CD4-positive, alpha-beta memory T cell (primary cell): ENCODE measurements at regions of chr12 and their contacts with region 1.

Region 1: DNA sequence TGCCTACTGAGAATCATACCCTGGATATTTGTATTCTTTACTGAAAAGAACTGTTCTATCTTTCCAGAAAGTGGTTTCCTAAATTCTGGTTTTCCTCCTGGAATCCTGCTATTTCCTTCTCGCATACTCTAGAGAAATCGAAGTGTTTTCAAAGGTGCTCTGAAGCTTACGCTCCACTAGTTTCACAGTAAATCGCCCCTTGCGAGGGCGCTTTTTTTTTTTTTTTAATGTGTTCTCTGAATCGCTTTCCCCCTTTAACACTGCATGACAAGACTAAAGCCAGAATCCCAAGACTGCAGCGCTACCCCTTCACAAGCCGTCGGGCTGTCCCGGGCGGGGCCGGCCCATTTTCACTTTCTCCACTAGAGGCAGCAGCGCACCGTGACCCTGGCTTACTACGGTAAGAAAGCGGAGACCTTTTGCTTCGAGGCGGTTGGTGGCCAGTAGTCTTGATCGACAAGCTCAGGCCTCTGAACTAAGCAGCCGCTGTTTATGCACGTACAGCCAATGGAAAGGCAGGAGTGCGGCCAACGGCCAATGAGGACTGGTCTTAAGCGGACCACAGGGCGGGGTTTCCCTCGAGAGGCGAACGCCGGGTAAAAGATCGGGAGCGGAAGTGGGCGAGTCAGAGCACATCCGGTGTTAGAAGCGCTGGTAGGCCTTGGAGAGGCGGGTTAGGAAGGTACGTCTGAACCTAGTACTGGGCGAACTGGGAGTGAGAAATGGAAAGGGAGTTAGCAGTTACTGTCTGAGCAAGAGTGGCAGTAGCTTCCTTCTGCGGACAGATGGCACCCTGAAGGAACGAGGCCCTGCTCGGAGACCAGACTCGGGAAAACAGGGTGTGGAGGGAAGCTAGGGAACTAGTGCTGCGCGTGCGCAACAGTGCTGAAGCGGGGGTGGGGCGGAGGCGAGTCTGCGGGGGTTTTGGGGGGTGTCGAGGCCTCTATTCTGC is at the start of gene TMBIM6:
- DNase-seq: peak; percentile 98 to 100 (median 99)
- H3K4me3 ChIP-seq: peak within 1 kb of the TSS; percentile 27 to 86
- H3K4me3 Mint-ChIP-seq: peak within 1 kb of the TSS; percentile 92 to 97 (median 93)
- H3K27ac ChIP-seq: peak within 1 kb of the TSS; percentile 99
- H3K27ac Mint-ChIP-seq: peak within 1 kb of the TSS; percentile 95 to 100 (median 98)
- H3K4me1 ChIP-seq: peaks cover 45% of the 10 kb centered on the region
- H3K4me1 Mint-ChIP-seq: peaks cover 27 to 52% (median 38%) of the 10 kb centered on the region in 4 donors
- H3K27me3 ChIP-seq: no peaks in the 10 kb centered on the region
- H3K27me3 Mint-ChIP-seq: no peaks in the 10 kb centered on the region
- total RNA-seq, gene TMBIM6: 421 to 431 TPM

Region 2: GRCh38 chr12:49130151-49131050 is 610.8 kb before region 1 on chr12:
- CTCF ChIA-PET with region 1: no interaction called
- POLR2A ChIA-PET with region 1: interaction called, 9 read pairs
- intact Hi-C with region 1: loop called (anchors 1 kb)
- DNase-seq: peak; percentile 93 to 95 (median 94)
- H3K4me3 ChIP-seq: peak overlapping the region; percentile 94 to 97
- H3K4me3 Mint-ChIP-seq: peak overlapping the region; percentile 97 to 99 (median 98)
- H3K27ac ChIP-seq: peak overlapping the region; percentile 94
- H3K27ac Mint-ChIP-seq: peak overlapping the region; percentile 98 to 99 (median 99)
- H3K4me1 ChIP-seq: peaks cover 42% of the 10 kb centered on the region
- H3K4me1 Mint-ChIP-seq: peaks cover 24 to 63% (median 36%) of the 10 kb centered on the region in 4 donors
- H3K27me3 ChIP-seq: no peaks in the 10 kb centered on the region
- H3K27me3 Mint-ChIP-seq: no peaks in the 10 kb centered on the region

Region 3: GRCh38 chr12:49623142-49623904 is 117.9 kb before region 1 on chr12 and contains the start of gene PRPF40B:
- CTCF ChIA-PET with region 1: interaction called, 5 read pairs
- POLR2A ChIA-PET with region 1: interaction called, 19 read pairs
- intact Hi-C with region 1: loop called (anchors 1 kb)
- DNase-seq: peak; percentile 88 to 90 (median 89)
- H3K4me3 ChIP-seq: peak within 1 kb of the TSS; percentile 73 to 94
- H3K4me3 Mint-ChIP-seq: peak within 1 kb of the TSS; percentile 87 to 93 (median 90)
- H3K27ac ChIP-seq: peak within 1 kb of the TSS; percentile 65
- H3K27ac Mint-ChIP-seq: peak within 1 kb of the TSS; percentile 93 to 98 (median 94)
- H3K4me1 ChIP-seq: peaks cover 22% of the 10 kb centered on the region
- H3K4me1 Mint-ChIP-seq: peaks cover 15 to 42% (median 21%) of the 10 kb centered on the region in 4 donors
- H3K27me3 ChIP-seq: no peaks in the 10 kb centered on the region
- H3K27me3 Mint-ChIP-seq: no peaks in the 10 kb centered on the region
- total RNA-seq, gene PRPF40B: 15.1 to 15.9 TPM

Region 4: GRCh38 chr12:49673446-49674317 is 67.5 kb before region 1 on chr12:
- CTCF ChIA-PET with region 1: interaction called, 10 read pairs
- POLR2A ChIA-PET with region 1: interaction called, 4 read pairs
- intact Hi-C with region 1: no loop called
- DNase-seq: peak in 1 of 5 donors; percentile 12
- H3K4me3 ChIP-seq: no peak overlapping the region
- H3K4me3 Mint-ChIP-seq: peak overlapping the region in 7 of 8 donors; percentile 8 to 77 (median 46)
- H3K27ac ChIP-seq: peak overlapping the region; percentile 80
- H3K27ac Mint-ChIP-seq: peak overlapping the region; percentile 92 to 99 (median 97)
- H3K4me1 ChIP-seq: peaks cover 76% of the 10 kb centered on the region
- H3K4me1 Mint-ChIP-seq: peaks cover 68 to 85% (median 78%) of the 10 kb centered on the region in 4 donors
- H3K27me3 ChIP-seq: no peaks in the 10 kb centered on the region
- H3K27me3 Mint-ChIP-seq: no peaks in the 10 kb centered on the region

Region 5: GRCh38 chr12:49776413-49776812 is 35.2 kb after region 1 on chr12:
- CTCF ChIA-PET with region 1: interaction called, 70 read pairs
- POLR2A ChIA-PET with region 1: interaction called, 41 read pairs
- intact Hi-C with region 1: loop called (anchors 1 kb)
- DNase-seq: peak in 4 of 5 donors; percentile 32 to 42 (median 38)
- H3K4me3 ChIP-seq: no peak overlapping the region
- H3K4me3 Mint-ChIP-seq: peak overlapping the region in 2 of 8 donors; percentile 38 to 64
- H3K27ac ChIP-seq: no peak overlapping the region
- H3K27ac Mint-ChIP-seq: peak overlapping the region in 1 of 7 donors; percentile 25
- H3K4me1 ChIP-seq: peaks cover 15% of the 10 kb centered on the region
- H3K4me1 Mint-ChIP-seq: peaks cover 8 to 19% (median 9%) of the 10 kb centered on the region in 4 donors
- H3K27me3 ChIP-seq: no peaks in the 10 kb centered on the region
- H3K27me3 Mint-ChIP-seq: peaks cover 10 to 19% of the 10 kb centered on the region in 2 donors

Region 6: GRCh38 chr12:50111693-50112455 is 370.7 kb after region 1 on chr12 and contains the start of gene COX14:
- CTCF ChIA-PET with region 1: interaction called, 3 read pairs
- POLR2A ChIA-PET with region 1: interaction called, 11 read pairs
- intact Hi-C with region 1: no loop called
- DNase-seq: peak; percentile 98 to 100 (median 100)
- H3K4me3 ChIP-seq: peak within 1 kb of the TSS; percentile 98 to 99
- H3K4me3 Mint-ChIP-seq: peak within 1 kb of the TSS; percentile 93 to 100 (median 96)
- H3K27ac ChIP-seq: peak within 1 kb of the TSS; percentile 93
- H3K27ac Mint-ChIP-seq: peak within 1 kb of the TSS; percentile 93 to 100 (median 98)
- H3K4me1 ChIP-seq: peaks cover 43% of the 10 kb centered on the region
- H3K4me1 Mint-ChIP-seq: peaks cover 18 to 50% (median 35%) of the 10 kb centered on the region in 4 donors
- H3K27me3 ChIP-seq: no peaks in the 10 kb centered on the region
- H3K27me3 Mint-ChIP-seq: peaks cover 0 to 1% of the 10 kb centered on the region in 2 donors
- total RNA-seq, gene COX14: 53.3 to 61.6 TPM